Gastrocnemius medialis (tissue), 4 donors: ENCODE measurements at regions of chr9 and their contacts with region 1.

Region 1: DNA sequence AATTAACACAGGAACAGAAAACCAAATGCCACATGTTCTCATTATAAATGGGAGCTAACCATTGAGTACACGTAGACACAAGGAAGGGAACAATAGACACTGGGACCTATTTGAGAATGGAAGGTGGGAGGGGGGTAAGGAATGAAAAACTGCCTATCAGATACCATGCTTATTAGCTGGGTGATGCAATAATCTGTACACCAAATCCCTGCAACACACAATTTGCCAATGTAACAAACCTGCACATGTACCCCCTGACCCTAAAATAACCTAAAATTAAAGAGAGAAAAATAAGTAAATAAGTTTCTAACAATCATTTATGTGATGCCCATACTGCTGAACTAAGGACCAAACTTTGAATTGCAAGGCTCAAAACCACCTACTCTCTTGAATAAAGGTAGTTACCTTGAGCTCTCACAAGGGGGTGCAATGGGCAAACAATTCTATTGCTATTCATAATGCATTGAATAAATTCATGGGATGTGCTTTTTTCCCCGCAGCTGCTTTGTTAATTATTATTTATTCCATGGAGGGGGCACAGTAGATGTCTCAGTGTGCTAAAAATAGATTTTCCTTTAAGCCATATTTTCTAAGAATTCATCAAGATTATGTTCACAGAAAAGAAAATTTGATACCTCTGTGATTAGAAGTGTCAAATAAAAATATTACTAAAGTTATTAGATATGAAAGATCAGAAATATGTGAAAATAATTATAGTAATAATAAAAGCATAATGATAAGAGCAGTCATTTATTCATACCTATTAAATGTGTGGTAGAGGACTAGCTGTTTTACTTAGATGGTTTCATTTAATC is 76.2 kb upstream of the PTPN3 start:
- DNase-seq: peak in 1 of 2 donors; percentile 10
- ATAC-seq: peak; percentile 60 to 82
- H3K4me3 ChIP-seq: no peak overlapping the region
- H3K27ac ChIP-seq: no peak overlapping the region
- H3K4me1 ChIP-seq: no peaks in the 10 kb centered on the region
- H3K27me3 ChIP-seq: no peaks in the 10 kb centered on the region
- CTCF ChIP-seq: peak; percentile 39 to 68 (median 65)
- POLR2A ChIP-seq: no peak

Region 2: DNA sequence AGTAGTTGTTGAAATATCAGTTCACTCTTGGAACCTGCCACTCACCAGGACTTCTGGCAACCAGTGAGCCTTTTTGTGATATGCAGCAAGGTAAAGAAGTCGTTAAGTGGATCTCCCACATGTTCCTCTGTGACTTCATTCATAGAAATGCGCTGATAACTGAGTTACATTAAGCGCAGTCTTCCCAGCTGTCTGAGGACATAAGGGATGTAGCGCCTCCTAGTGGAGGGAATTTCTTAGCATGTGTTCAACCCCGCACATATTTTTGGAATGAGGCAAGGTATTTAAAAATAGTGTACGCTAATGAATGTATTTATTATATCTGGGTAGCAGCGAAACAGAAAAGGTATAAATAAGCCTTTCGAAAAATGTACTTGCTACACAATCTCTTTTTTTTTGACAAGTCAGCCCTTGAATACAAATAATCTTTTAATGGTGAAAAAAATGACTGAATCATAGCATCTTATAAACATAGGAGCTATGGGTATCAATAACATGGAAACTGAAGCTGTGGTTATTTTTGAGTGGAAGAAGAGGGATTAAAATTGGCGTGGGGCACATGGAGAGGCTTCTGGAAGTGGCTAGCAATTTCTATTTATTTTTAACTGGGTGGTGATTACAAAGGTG is 243.7 kb after region 1 on chr9:
- in situ Hi-C with region 1: loop called (anchors 10 to 25 kb)
- intact Hi-C with region 1: loop called (anchors 1 kb)
- DNase-seq: peak; percentile 30 to 57
- ATAC-seq: peak; percentile 74 to 86
- H3K4me3 ChIP-seq: no peak overlapping the region
- H3K27ac ChIP-seq: peak overlapping the region in 1 of 4 donors; percentile 1
- H3K4me1 ChIP-seq: peaks cover 7 to 10% of the 10 kb centered on the region in 2 donors
- H3K27me3 ChIP-seq: no peaks in the 10 kb centered on the region
- CTCF ChIP-seq: peak; percentile 63 to 85 (median 73)
- POLR2A ChIP-seq: no peak

Region 3: DNA sequence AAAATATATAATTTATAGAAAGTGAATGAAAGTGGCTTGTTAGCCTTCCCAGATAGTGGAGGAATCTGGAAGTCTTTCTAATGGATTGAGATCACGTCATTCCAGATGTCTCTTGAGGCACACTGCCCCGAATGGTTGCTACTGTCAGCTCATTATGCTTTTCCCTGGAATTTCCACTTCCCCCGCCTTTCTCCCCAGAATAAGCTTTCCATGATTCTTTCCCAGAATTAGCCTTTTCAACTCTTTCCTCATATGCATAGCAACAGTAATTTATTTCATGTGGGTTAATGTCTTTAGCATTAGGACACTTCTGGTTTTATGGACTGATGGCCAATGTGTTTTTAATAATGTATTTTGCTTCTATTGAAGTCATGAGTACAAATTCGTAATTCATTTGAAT is 287.2 kb after region 1 on chr9:
- in situ Hi-C with region 1: no loop called
- intact Hi-C with region 1: no loop called
- DNase-seq: no peak
- ATAC-seq: peak in 1 of 2 donors; percentile 27
- H3K4me3 ChIP-seq: no peak overlapping the region
- H3K27ac ChIP-seq: peak overlapping the region in 2 of 4 donors; percentile 39 to 64
- H3K4me1 ChIP-seq: peaks cover 11 to 14% of the 10 kb centered on the region in 2 donors
- H3K27me3 ChIP-seq: no peaks in the 10 kb centered on the region
- CTCF ChIP-seq: no peak
- POLR2A ChIP-seq: no peak

Region 4: DNA sequence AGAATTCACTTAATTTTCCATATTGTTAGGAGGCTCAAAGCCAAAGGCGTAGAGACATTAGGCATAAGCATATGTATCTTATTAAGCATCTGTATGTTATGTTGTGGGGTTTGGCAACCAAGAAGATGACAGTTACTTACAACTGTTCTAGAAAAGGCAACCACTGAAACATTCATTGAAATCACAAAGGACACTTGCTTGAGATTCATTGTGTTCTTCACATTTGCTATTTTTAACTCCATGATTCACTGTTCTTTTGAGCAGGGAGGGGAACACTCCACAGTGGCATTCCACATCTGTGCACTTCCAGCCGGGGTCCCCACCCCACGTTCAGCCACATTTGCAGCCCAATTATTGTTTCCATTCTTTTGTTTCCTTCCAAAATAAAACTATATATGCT is 312.8 kb after region 1 on chr9:
- in situ Hi-C with region 1: loop called in 2 of 4 experiments (anchors 25 kb)
- intact Hi-C with region 1: loop called (anchors 5 kb)
- DNase-seq: no peak
- ATAC-seq: peak; percentile 86
- H3K4me3 ChIP-seq: no peak overlapping the region
- H3K27ac ChIP-seq: peak overlapping the region; percentile 56 to 79 (median 68)
- H3K4me1 ChIP-seq: peaks cover 28 to 31% of the 10 kb centered on the region in 2 donors
- H3K27me3 ChIP-seq: no peaks in the 10 kb centered on the region
- CTCF ChIP-seq: no peak
- POLR2A ChIP-seq: no peak

Region 5: DNA sequence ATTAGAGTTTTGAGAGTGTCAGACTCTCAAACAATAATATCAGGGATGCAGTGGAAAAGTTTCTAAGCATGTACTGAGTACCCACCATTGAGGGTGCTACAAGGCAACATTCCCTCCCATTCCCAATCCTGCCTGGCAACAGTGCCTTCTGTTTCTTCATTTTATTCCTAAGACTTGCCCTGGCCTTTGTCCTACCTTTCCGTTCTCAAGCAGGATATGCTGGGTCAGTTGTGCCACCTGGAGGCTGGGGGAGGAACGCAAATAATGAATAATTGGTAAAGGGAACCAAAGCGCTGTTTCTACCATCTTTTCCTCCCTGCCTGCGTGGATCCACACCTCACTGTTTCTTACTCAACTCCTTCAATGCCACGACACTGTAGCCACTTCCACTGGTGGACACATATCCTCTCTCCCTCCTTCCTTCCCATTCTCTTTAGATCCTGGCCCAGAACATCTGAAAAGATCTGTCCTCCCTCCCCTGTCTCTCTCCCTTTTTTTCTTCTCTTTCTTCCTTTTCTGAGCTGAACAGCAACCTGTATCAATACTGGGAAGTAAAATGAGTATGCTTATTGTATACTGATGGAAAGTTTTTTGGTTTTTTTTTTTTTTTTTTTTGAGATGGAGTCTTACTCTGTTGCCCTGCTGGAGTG is 484.2 kb after region 1 on chr9:
- in situ Hi-C with region 1: loop called in 2 of 4 experiments (anchors 10 to 25 kb)
- intact Hi-C with region 1: loop called (anchors 2 kb)
- DNase-seq: peak; percentile 14 to 35
- ATAC-seq: peak; percentile 68 to 78
- H3K4me3 ChIP-seq: no peak overlapping the region
- H3K27ac ChIP-seq: peak overlapping the region in 2 of 4 donors; percentile 6 to 36
- H3K4me1 ChIP-seq: peaks cover 6 to 22% of the 10 kb centered on the region in 2 donors
- H3K27me3 ChIP-seq: no peaks in the 10 kb centered on the region
- CTCF ChIP-seq: peak; percentile 59 to 79 (median 62)
- POLR2A ChIP-seq: no peak

Region 6: DNA sequence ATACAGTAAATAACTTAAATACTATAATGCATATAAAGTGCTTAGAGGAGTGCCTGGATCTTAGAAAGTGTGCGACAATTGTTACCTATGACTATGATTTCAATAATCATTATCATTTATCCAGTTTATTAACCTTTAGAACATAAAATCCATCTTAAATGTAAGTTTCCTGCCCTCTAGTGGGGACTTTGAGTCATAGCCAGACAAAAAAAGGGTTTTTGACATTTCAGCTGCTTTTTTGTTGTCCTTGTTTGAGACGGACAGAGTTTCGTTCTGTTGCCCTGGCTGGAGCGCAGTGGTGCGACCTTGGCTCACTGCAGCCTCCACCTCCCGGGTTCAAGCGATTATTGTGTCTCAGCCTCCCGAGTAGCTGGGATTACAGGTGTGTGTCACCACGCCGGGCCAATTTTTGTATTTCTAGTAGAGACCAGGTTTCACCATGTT is 643.4 kb after region 1 on chr9:
- in situ Hi-C with region 1: loop called in 1 of 4 experiments (anchors 25 kb)
- intact Hi-C with region 1: loop called (anchors 5 kb)
- DNase-seq: no peak
- ATAC-seq: no peak
- H3K4me3 ChIP-seq: no peak overlapping the region
- H3K27ac ChIP-seq: no peak overlapping the region
- H3K4me1 ChIP-seq: no peaks in the 10 kb centered on the region
- H3K27me3 ChIP-seq: no peaks in the 10 kb centered on the region
- CTCF ChIP-seq: peak; percentile 42 to 78 (median 66)
- POLR2A ChIP-seq: no peak